Posterior vena cava (tissue), 2 donors: ENCODE measurements at regions of chr7 and their contacts with region 1.

Region 1: DNA sequence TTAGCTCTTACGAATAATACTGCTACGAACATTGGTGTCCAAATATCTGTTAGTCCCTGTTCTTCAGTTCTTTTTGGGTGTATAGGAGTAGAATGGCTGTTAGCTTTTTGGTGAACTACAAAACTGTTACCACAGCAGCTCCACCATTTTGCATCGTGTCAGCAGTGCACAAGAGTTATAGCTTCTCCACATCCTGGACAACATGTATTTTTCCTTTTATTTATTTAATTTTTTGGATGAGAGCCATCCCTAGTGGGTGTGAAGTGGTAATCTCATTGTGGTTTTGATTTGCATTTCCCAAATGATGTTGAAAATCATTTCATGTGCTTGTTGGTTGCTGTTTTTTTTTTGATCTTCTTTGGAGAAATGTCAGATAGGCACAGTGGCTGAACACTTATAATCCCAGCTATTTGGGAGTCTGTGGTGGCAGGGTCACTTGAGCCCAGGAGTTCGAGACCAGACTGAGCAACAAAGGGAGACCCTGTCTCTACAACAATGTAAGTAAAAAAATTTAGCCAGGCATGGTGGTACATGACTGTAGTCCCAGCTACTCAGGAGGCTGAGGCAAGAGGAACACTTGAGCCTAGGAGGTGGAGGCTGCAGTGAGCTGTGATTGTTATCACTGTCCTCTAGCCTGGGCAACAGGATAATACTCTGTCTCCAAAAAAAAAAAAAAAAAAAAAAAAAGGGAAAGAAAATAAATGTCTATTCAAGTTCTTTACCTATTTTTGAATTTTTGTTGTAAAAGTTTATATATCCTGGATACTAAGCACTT is 31.7 kb downstream of the TRIM24 start:
- DNase-seq: no peak

Region 2: DNA sequence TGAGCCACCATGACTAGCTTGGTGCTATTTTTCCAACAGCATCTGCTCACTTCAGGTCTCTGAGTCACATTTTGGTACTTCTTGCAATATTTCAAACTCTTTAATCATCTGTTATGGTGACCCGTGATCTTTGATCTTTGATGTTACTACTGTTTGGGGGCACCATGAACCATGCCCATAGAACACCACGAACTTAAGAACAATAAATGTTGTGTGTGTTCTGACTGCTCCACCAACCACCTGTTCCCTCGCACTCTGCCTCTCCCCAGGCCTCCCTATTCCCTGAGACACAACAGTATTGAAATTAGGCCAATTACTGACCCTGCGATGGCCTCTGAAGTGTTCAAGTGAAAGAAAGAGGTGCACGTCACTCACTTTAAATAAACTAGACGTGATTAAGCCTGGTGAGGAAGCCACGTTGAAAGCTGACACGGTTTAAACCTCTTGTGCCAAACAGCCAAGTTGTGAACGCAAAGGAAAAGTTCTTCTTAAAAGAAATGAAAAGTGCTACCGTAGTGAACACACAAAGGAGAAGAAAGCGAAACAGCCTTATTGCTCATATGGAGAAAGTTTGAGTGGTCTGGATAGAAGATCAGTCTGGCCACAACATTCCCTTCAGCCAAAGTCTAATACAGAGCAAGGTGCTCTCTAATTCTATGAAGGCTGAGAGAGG is 333.4 kb after region 1 on chr7:
- intact Hi-C with region 1: loop called in 1 of 2 experiments (anchors 5 kb)
- DNase-seq: no peak